Gastrocnemius medialis (tissue), 4 donors: ENCODE measurements at regions of chr1 and their contacts with region 1.

Region 1: DNA sequence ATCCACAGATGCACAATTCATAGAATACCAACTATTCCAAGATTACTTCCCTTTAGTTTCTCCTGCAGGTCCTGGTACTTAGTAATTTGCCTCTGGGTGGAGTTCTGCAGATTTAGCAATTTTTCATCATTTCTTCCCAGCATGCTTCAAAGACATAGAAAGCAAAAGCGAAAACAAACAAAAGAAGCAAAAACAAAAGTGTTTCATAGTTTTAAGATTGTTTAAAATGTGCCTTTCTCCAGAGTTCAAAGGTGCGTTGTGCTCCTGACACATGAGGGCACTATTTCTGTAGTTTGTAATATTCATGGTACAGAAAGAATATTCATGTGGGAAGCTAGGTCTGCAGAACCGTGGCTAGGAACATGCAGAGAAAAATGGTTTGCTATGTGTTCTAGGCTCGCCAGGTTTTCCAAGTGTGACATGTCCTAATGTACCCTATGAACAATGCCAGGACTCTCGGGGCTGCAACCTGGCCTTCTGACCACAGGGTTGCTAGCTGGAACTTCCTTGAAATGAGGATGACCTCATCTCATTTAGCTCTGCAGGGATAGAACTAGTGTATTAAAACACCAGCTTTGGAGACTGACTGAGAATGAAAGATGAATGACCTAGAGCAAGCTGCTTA is 30.0 kb upstream of the RCSD1 start:
- DNase-seq: peak; percentile 38 to 72
- ATAC-seq: peak; percentile 93 to 96
- H3K4me3 ChIP-seq: no peak overlapping the region
- H3K27ac ChIP-seq: peak overlapping the region in 3 of 4 donors; percentile 15 to 70 (median 29)
- H3K4me1 ChIP-seq: peaks cover 19 to 25% of the 10 kb centered on the region in 2 donors
- H3K27me3 ChIP-seq: no peaks in the 10 kb centered on the region
- CTCF ChIP-seq: peak; percentile 39 to 76 (median 65)
- POLR2A ChIP-seq: no peak

Region 2: DNA sequence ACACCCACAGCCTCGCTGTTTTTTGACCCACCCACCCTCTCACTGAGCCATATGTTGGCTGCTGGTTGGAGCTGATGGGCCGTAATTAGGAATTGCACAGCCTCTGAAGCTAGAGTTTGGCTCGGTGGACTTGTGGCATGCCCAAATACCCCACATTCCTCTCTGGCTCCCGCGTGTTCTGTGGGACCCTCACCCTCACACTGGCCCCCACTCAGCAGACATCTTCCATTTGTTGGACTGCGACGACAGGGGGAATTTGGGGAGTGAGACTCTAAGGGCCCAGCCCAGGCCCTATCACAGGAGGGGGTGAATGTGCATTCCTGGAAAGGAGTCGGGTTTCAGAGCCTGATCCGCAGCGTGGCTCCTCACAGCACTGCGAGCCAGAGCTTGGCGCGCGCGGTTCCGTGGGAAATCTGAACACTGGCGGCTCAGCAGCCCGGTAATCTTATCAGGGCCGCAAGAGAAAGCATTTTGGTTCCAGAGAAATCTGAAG is 35.1 kb after region 1 on chr1:
- in situ Hi-C with region 1: no loop called
- intact Hi-C with region 1: loop called (anchors 5 kb)
- DNase-seq: peak in 1 of 2 donors; percentile 67
- ATAC-seq: peak; percentile 68 to 76
- H3K4me3 ChIP-seq: peak overlapping the region; percentile 10 to 24 (median 24)
- H3K27ac ChIP-seq: peak overlapping the region; percentile 90 to 96 (median 92)
- H3K4me1 ChIP-seq: peaks cover 50 to 69% of the 10 kb centered on the region in 2 donors
- H3K27me3 ChIP-seq: no peaks in the 10 kb centered on the region
- CTCF ChIP-seq: no peak
- POLR2A ChIP-seq: no peak

Region 3: GRCh38 chr1:167687919-167688519 is 88.0 kb after region 1 on chr1:
- in situ Hi-C with region 1: loop called (anchors 5 kb)
- intact Hi-C with region 1: loop called (anchors 1 kb)
- DNase-seq: peak; percentile 51 to 68
- ATAC-seq: peak; percentile 38 to 39
- H3K4me3 ChIP-seq: no peak overlapping the region
- H3K27ac ChIP-seq: peak overlapping the region; percentile 82 to 92 (median 86)
- H3K4me1 ChIP-seq: peaks cover 46 to 61% of the 10 kb centered on the region in 2 donors
- H3K27me3 ChIP-seq: no peaks in the 10 kb centered on the region
- CTCF ChIP-seq: peak; percentile 91 to 96 (median 95)
- POLR2A ChIP-seq: no peak

Region 4: GRCh38 chr1:167803358-167804207 is 203.5 kb after region 1 on chr1:
- in situ Hi-C with region 1: loop called in 1 of 4 experiments (anchors 25 kb)
- intact Hi-C with region 1: loop called (anchors 5 kb)
- DNase-seq: peak; percentile 78 to 84
- ATAC-seq: peak; percentile 98 to 99
- H3K4me3 ChIP-seq: peak overlapping the region in 1 of 4 donors; percentile 17
- H3K27ac ChIP-seq: no peak overlapping the region
- H3K4me1 ChIP-seq: no peaks in the 10 kb centered on the region
- H3K27me3 ChIP-seq: no peaks in the 10 kb centered on the region
- CTCF ChIP-seq: peak; percentile 73 to 96 (median 87)
- POLR2A ChIP-seq: no peak